H1 (cell line): ENCODE measurements at regions of chr2 and their contacts with region 1.

Region 1: GRCh38 chr2:219661197-219661954 is 33.9 kb downstream of the SLC4A3 start:
- DNase-seq: no peak
- H3K4me3 ChIP-seq: no peak overlapping the region
- H3K27ac ChIP-seq: no peak overlapping the region
- H3K4me1 ChIP-seq: peaks cover 0 to 3% (median 1%) of the 10 kb centered on the region in 4 experiments; a peak in 1 of 7 replicates
- H3K27me3 ChIP-seq: no peaks in the 10 kb centered on the region
- CTCF ChIP-seq: no peak
- EP300 ChIP-seq: no peak
- POLR2A ChIP-seq: no peak
- RAD21 ChIP-seq: no peak

Region 2: GRCh38 chr2:219508971-219509779 is 152.2 kb before region 1 on chr2:
- CTCF ChIA-PET with region 1: no interaction called
- POLR2A ChIA-PET with region 1: no interaction called
- DNase-seq: no peak
- H3K4me3 ChIP-seq: peak overlapping the region in 2 of 4 experiments; percentile 51 to 56; a peak in 4 of 8 replicates
- H3K27ac ChIP-seq: no peak overlapping the region
- H3K4me1 ChIP-seq: peaks cover 7 to 72% (median 62%) of the 10 kb centered on the region in 4 experiments
- H3K27me3 ChIP-seq: peaks cover 2 to 29% (median 26%) of the 10 kb centered on the region in 4 experiments
- CTCF ChIP-seq: no peak
- EP300 ChIP-seq: no peak
- POLR2A ChIP-seq: no peak
- RAD21 ChIP-seq: no peak

Region 3: DNA sequence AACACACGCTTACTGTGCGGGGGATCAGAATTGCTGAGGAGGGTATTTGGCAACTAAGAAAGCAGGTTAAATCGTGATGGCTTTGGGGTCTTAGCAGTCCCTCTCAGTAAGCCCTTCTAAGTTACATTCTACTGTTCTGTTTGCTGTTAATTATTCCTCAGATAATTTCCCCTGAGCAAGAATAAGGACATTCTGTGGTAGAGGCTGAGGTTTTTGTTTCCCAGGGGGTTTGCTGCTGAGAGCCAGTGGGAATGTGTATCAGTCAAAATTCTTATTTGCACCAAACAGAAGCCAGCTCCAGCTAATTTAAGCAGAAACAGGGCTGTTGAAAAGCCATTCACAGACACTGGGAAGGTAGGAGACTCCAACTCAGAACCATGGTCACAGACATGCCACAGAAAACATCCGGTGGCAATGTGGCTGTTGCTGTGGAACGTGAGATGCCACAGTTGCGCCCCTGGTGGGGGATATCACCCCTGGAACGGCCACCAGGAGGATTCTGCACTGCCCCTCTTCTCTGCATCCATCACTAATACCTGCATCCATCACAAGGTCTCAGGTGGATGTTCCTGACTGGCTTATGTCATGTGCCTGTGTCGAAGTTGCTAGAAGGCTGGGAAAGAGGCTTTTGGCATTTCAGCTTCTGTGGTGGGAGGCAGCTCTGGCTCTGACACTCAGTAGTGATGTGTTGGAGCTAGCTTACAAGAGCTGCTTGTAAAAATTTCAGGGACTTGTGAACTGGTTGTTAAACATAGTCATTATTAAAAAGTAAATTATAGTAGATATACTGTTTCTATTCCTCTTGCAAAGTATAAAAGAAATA is 10.7 kb before region 1 on chr2:
- CTCF ChIA-PET with region 1: interaction called, 12 read pairs
- POLR2A ChIA-PET with region 1: interaction called, 4 read pairs
- DNase-seq: no peak
- H3K4me3 ChIP-seq: no peak overlapping the region
- H3K27ac ChIP-seq: no peak overlapping the region
- H3K4me1 ChIP-seq: peaks cover 0 to 5% (median 2%) of the 10 kb centered on the region in 4 experiments; a peak in 3 of 7 replicates
- H3K27me3 ChIP-seq: no peaks in the 10 kb centered on the region
- CTCF ChIP-seq: peak in 2 of 3 experiments; percentile 1 to 9; a peak in 2 of 4 replicates
- EP300 ChIP-seq: no peak
- POLR2A ChIP-seq: no peak
- RAD21 ChIP-seq: no peak